A549 (cell line): ENCODE measurements at regions of chr7 and their contacts with region 1.

Region 1: GRCh38 chr7:43582503-43583423 is at the start of gene STK17A:
- DNase-seq: peak; percentile 75 to 93
- ATAC-seq: peak; percentile 85 to 91
- H3K4me3 ChIP-seq: peak within 1 kb of the TSS; percentile 88
- H3K27ac ChIP-seq: peak within 1 kb of the TSS; percentile 87 to 94
- H3K4me1 ChIP-seq: peaks cover 39% of the 10 kb centered on the region
- CTCF ChIP-seq: peak; percentile 99
- EP300 ChIP-seq: no peak
- POLR2A ChIP-seq: peak; percentile 97
- RAD21 ChIP-seq: peak; percentile 96 to 100
- polyA plus RNA-seq, gene STK17A: 20.2 and 27.3 TPM in 2 replicates

Region 2: GRCh38 chr7:43454936-43455518 is 127.7 kb before region 1 on chr7:
- CTCF ChIA-PET with region 1: interaction called, 16 read pairs
- POLR2A ChIA-PET with region 1: no interaction called
- DNase-seq: peak; percentile 22 to 38
- ATAC-seq: peak; percentile 56 to 63; a peak in 4 of 6 replicates
- H3K4me3 ChIP-seq: no peak overlapping the region
- H3K27ac ChIP-seq: no peak overlapping the region
- H3K4me1 ChIP-seq: no peaks in the 10 kb centered on the region
- CTCF ChIP-seq: peak; percentile 59
- EP300 ChIP-seq: no peak
- POLR2A ChIP-seq: no peak
- RAD21 ChIP-seq: peak; percentile 62 to 70

Region 3: GRCh38 chr7:43511029-43511428 is 71.7 kb before region 1 on chr7:
- CTCF ChIA-PET with region 1: no interaction called
- POLR2A ChIA-PET with region 1: no interaction called
- DNase-seq: peak in 1 of 2 experiments; percentile 17
- ATAC-seq: peak; percentile 43 to 72; a peak in 3 of 6 replicates
- H3K4me3 ChIP-seq: no peak overlapping the region
- H3K27ac ChIP-seq: no peak overlapping the region
- H3K4me1 ChIP-seq: no peaks in the 10 kb centered on the region
- CTCF ChIP-seq: no peak
- EP300 ChIP-seq: no peak
- POLR2A ChIP-seq: no peak
- RAD21 ChIP-seq: no peak

Region 4: GRCh38 chr7:43535810-43536585 is 46.8 kb before region 1 on chr7:
- CTCF ChIA-PET with region 1: no interaction called
- POLR2A ChIA-PET with region 1: no interaction called
- DNase-seq: no peak
- ATAC-seq: no peak
- H3K4me3 ChIP-seq: no peak overlapping the region
- H3K27ac ChIP-seq: no peak overlapping the region
- H3K4me1 ChIP-seq: no peaks in the 10 kb centered on the region
- CTCF ChIP-seq: no peak
- EP300 ChIP-seq: no peak
- POLR2A ChIP-seq: no peak
- RAD21 ChIP-seq: no peak

Region 5: DNA sequence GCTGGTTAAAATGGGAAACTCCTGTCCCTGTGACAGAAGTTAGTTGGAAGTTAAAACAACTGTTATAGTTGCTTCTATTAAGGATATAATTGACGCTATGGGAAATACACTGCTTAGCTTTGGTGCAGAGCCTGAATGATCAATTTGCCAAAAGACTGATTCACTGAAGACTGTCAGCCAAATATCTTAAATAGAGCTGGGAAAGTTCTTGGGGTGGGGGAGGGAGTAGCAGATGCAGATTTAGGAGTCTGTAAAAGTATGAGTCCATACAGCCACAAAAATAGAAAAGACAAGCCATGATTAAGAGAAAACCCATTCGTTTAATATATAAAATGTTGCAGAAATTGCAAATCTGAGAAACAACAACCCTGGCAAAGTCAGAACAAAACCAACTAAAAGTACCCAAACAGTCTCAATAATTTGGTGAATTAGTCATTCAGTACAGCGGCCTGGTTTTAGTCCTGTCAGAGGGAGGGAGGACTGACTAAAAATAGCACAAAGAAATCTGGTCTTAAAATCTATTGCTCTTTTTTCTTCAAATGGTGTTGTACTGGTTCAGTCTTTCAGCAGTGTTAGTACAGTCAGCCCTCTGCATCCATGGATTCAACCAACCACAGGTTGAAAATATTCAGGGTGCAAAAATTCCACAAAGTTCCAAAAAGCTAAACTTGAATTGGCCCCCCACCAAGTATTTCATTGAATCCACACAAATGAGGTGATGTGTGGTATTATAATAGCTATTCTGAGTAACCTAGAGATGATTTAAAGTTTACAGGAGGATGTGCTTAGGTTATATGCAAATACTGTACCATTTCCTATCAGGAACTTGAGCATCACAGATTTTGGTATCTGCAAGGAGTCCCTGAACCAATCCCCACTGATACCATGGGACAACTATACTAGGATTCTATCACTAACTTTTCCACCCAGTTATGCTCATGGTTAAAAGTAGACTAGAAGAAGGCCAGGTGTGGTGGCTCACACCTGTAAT is 30.1 kb after region 1 on chr7:
- CTCF ChIA-PET with region 1: interaction called, 20 read pairs
- POLR2A ChIA-PET with region 1: interaction called, 7 read pairs
- DNase-seq: no peak
- ATAC-seq: no peak
- H3K4me3 ChIP-seq: no peak overlapping the region
- H3K27ac ChIP-seq: no peak overlapping the region
- H3K4me1 ChIP-seq: no peaks in the 10 kb centered on the region
- CTCF ChIP-seq: no peak
- EP300 ChIP-seq: no peak
- POLR2A ChIP-seq: no peak
- RAD21 ChIP-seq: no peak

Region 6: DNA sequence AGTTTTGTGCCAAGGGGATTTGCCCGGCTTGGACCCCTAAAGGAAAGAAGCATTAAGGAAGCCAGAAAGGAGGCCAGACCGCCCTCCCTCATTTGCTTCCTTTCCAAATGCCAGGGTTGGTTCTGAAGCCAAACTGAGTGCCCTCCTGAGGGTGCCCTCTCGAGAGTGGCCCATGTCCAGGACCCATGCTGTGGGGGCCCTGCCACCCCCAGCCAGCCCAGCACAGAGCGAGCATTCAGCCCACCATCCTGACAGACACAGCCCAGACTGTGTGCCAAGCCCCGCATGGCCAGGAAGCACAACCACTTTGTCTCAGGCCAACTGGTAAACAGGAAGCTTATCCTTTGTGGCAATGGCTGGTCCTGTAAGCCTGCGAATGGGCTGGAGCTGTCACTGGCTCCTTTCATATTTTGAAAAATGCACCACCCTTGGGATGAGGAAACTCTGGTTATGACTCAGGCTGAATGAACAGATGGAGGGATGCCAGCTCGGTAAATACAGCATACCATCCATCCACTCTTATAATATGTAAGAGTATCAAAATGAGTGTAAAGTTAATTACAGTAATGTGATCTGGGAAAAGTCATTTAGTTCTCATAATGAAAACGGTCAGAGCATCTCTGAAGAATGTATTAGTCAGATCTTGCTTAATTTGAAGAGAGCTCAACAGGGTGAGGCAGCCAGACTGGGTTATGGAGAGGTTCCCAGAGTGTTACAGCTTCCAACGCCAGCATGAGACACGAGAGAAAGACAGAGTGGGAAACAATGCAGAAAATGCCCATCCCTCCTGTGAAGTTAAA is 65.1 kb after region 1 on chr7:
- CTCF ChIA-PET with region 1: interaction called, 25 read pairs
- POLR2A ChIA-PET with region 1: interaction called, 27 read pairs
- DNase-seq: peak; percentile 66 to 83
- ATAC-seq: peak; percentile 85 to 86
- H3K4me3 ChIP-seq: no peak overlapping the region
- H3K27ac ChIP-seq: peak overlapping the region; percentile 69 to 92
- H3K4me1 ChIP-seq: peaks cover 62% of the 10 kb centered on the region
- CTCF ChIP-seq: no peak
- EP300 ChIP-seq: peak; percentile 21 to 60; a peak in 1 of 5 replicates
- POLR2A ChIP-seq: no peak
- RAD21 ChIP-seq: peak in 1 of 2 experiments; percentile 34; a peak in 2 of 5 replicates

Region 7: GRCh38 chr7:43700059-43700501 is 117.3 kb after region 1 on chr7:
- CTCF ChIA-PET with region 1: interaction called, 261 read pairs
- POLR2A ChIA-PET with region 1: interaction called, 120 read pairs
- DNase-seq: peak; percentile 28 to 56
- ATAC-seq: peak; percentile 78 to 80; a peak in 4 of 6 replicates
- H3K4me3 ChIP-seq: no peak overlapping the region
- H3K27ac ChIP-seq: no peak overlapping the region
- H3K4me1 ChIP-seq: peaks cover 42% of the 10 kb centered on the region
- CTCF ChIP-seq: peak; percentile 96
- EP300 ChIP-seq: no peak
- POLR2A ChIP-seq: no peak
- RAD21 ChIP-seq: peak; percentile 93 to 96

Region 8: DNA sequence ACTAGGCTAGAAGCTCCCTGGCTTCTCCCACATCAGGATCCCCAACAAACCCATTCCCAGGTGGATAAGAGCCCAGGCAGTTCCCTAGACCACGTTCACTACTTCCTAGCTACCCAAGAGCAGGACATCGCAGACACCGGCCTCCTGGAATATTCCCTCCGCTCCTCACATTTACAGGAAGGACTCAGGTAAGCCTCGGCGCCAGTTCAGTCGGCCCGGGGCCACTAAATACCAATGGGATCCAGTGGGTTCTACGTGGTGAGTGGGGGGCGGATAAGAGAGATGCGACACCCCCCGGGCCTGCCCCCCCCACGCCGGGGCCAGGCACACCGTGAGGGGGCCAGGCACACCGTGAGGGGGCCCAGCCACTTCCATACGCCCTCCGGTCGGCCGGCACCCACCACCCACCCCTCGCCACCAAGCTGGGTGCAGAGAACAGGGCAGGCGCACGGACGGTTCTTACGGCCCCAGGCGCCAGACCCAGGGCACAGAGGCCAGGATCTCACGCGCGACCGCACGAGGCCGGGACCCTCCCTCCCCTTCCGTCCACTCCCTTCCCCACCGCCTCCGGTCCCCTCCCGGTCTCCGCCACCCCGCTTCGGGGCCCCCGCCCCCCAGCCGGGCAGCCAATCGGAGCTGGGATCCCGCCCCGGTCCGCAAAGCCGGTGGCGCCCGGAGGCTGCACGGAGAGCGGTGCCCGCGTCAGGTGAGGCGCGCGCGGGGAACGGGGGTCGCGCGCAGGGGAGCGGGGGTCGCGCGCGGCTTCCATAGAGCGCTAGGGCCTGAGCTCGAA is 175.5 kb after region 1 on chr7 and contains the start of gene BLVRA:
- CTCF ChIA-PET with region 1: interaction called, 12 read pairs
- POLR2A ChIA-PET with region 1: interaction called, 3 read pairs
- DNase-seq: peak; percentile 38 to 90
- ATAC-seq: peak; percentile 83 to 86
- H3K4me3 ChIP-seq: peak within 1 kb of the TSS; percentile 53
- H3K27ac ChIP-seq: peak within 1 kb of the TSS; percentile 74 to 95
- H3K4me1 ChIP-seq: peaks cover 43% of the 10 kb centered on the region
- CTCF ChIP-seq: no peak
- EP300 ChIP-seq: no peak
- POLR2A ChIP-seq: peak; percentile 71
- RAD21 ChIP-seq: no peak
- polyA plus RNA-seq, gene BLVRA: 71.3 and 85.4 TPM in 2 replicates

Region 9: DNA sequence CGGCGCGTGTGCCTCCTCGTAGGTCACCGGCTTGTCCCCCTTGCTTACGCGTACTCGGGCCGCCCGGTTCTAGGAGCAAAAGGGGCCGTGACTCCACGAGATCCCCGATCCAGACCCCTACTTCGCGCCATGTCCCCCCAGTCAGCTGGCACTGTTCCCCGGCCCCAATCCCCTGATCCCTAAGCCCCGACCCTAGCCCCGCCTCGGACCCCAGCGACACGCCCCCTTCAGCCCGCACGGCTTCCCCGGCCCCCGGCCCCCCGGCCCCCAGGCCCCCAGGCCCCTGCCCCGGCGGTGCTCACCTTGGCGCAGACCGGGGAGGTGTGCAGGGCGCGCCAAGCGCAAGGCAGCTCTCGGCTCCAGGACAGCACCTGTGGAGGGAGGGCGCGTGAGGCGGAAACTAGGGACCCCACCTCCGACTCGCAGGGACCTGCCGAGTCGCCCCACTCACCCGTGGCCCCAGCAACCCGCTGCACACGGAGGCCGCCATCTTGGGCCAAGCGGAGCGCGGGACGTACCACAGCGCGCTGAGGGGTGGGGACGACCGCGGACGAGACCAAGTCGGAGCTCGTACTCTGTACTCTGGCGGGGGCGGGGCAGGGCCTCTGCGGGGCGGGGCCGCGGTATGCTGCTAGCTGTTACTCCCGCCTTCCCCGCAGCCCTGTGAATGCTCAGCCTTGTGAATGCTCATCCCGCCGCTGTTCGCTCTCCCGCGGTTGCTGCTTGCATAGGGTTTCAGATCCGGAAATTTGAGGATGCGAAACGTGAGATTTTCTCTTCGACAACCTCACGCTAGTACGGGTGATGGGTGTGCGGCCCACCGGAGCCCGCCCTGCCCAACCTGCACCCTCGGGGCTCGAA is 286.5 kb after region 1 on chr7 and contains the start of gene MRPS24:
- CTCF ChIA-PET with region 1: no interaction called
- POLR2A ChIA-PET with region 1: interaction called, 13 read pairs
- DNase-seq: peak; percentile 93 to 96
- ATAC-seq: peak; percentile 96 to 99
- H3K4me3 ChIP-seq: peak within 1 kb of the TSS; percentile 75
- H3K27ac ChIP-seq: peak within 1 kb of the TSS; percentile 85 to 99
- H3K4me1 ChIP-seq: peaks cover 25% of the 10 kb centered on the region
- CTCF ChIP-seq: no peak
- EP300 ChIP-seq: no peak
- POLR2A ChIP-seq: peak; percentile 96
- RAD21 ChIP-seq: no peak; a peak in 1 of 5 replicates
- polyA plus RNA-seq, gene MRPS24: 170 and 217 TPM in 2 replicates